ENCODE measurements at regions of chr5 and their contacts with region 1.

Region 1: GRCh38 chr5:36690041-36690961 is 83.9 kb downstream of the SLC1A3 start:
- DNase-seq: peak; percentile 87
- CTCF ChIP-seq: peak; percentile 86

Region 2: GRCh38 chr5:36236801-36237200 is 453.5 kb before region 1 on chr5:
- in situ Hi-C with region 1: no loop called
- DNase-seq: no peak
- CTCF ChIP-seq: no peak

Region 3: DNA sequence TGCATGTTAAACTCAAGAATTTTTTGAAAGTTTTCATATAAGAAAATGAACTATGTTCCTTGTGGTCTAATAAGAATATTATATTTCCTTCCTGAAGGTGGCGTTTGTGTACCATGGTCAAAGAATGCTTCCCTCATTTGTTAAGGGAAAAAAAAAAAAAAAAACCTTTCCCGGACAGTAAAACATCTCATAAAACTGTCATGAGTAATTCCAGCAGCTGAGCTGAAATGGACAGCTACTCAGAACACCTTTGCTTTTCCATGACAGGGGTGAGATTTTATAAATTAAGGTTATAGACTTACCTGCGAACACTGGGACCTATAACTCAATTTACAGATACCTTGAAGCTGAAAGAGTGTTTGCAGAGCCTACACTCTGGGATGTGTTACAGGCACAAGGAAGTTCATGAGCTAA is 275.4 kb before region 1 on chr5:
- in situ Hi-C with region 1: loop called (anchors 10 kb)
- DNase-seq: no peak
- CTCF ChIP-seq: peak; percentile 5

Region 4: GRCh38 chr5:36444582-36445418 is 245.5 kb before region 1 on chr5:
- in situ Hi-C with region 1: no loop called
- DNase-seq: no peak
- CTCF ChIP-seq: no peak

Region 5: GRCh38 chr5:36908544-36909260 is 218.4 kb after region 1 on chr5:
- in situ Hi-C with region 1: no loop called
- DNase-seq: no peak
- CTCF ChIP-seq: no peak

Measured in GM13976 (cell line).